Mammary epithelial cell (primary cell): ENCODE measurements at regions of chr16 and their contacts with region 1.

Region 1: DNA sequence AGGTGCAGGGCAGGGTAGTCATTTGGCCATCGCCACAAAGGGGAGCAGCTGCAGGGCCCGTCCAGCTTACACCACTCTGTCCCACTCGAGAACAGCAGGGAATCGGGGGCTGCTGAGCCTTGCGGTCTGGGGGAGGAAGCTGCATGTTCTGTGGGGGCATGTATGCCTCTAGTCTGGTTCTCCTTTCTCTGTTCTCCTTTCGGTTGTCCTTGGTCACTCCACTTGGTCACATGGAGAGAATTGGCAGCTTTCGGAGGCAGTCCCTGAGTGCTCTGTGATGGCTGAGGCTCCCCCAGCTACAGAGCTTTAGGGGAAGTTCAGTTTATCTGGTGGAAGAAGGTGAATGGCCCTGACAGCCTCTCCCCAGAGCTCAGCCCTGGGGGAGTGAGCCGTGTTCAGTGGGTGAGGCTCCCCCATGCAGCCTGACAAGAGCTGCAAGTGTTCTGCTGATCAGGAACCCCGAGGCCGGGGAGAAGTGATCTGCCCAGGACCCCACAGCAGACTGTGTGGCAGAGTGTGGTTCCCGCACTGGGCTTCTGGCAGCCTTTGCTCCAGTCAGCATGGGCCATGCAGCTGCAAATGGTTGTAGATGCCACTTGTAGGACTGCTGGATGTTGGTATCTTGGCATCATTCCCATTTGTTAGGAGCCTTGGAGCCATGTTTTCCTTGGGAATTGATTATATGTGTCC is 22.3 kb upstream of the SMPD3 start:
- DNase-seq: no peak
- H3K4me3 ChIP-seq: no peak overlapping the region
- H3K27ac ChIP-seq: no peak overlapping the region
- H3K4me1 ChIP-seq: peaks cover 6% of the 10 kb centered on the region
- H3K27me3 ChIP-seq: peaks cover 5% of the 10 kb centered on the region
- CTCF ChIP-seq: no peak

Region 2: DNA sequence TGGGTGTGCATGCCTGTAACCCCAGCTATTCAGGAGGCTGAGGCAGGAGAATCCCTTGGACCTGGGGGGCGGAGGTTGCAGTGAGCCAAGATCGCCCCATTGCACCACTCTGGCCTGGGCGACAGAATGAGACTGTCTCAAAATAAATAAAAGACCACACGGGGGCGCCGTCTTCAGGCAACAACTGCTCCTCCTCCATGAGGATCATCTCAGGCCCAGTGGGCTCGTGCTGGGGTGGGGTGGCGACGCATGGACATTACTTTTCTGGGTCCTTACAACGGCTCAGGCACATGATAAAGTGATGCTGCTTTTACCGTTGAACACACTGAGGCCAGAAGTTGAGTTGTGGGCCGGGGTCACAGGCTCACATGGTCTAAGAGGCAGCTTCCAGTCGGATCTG is 103.6 kb before region 1 on chr16:
- CTCF ChIA-PET with region 1: no interaction called
- dilution Hi-C with region 1: loop called (anchors 5 kb)
- in situ Hi-C with region 1: no loop called
- intact Hi-C with region 1: no loop called
- DNase-seq: no peak
- H3K4me3 ChIP-seq: no peak overlapping the region
- H3K27ac ChIP-seq: no peak overlapping the region
- H3K4me1 ChIP-seq: no peaks in the 10 kb centered on the region
- H3K27me3 ChIP-seq: no peaks in the 10 kb centered on the region
- CTCF ChIP-seq: peak; percentile 34 to 45

Region 3: DNA sequence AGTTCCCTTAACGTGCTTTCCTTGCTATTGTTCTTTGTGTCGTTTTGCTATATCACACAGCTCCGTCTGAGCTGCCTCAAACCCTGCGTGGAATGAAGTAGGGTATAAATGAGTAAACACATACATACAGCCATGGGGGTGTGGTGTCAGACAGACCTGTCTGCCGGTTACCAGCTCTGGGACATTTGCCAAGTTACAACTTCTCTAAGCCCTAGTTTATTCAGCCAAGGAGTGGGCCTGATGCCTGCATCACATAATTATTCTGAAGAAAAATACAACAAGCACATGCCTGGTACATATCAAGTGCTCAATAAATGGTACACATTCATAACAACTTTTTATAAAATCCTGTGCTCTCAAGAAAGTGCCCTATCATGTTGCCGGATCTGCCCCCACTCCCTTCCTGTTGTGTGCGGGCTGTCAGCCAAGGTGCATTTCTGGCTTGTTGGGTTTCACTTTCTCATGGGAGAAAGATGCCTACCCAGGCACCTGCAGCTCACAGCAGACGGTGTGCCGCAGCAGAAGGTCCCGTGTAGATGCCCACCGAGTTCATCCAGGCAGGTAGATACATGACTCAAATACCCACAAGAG is 52.8 kb before region 1 on chr16:
- CTCF ChIA-PET with region 1: no interaction called
- dilution Hi-C with region 1: no loop called
- in situ Hi-C with region 1: no loop called
- intact Hi-C with region 1: no loop called
- DNase-seq: peak; percentile 66
- H3K4me3 ChIP-seq: no peak overlapping the region
- H3K27ac ChIP-seq: no peak overlapping the region
- H3K4me1 ChIP-seq: peaks cover 8% of the 10 kb centered on the region
- H3K27me3 ChIP-seq: no peaks in the 10 kb centered on the region
- CTCF ChIP-seq: no peak

Region 4: DNA sequence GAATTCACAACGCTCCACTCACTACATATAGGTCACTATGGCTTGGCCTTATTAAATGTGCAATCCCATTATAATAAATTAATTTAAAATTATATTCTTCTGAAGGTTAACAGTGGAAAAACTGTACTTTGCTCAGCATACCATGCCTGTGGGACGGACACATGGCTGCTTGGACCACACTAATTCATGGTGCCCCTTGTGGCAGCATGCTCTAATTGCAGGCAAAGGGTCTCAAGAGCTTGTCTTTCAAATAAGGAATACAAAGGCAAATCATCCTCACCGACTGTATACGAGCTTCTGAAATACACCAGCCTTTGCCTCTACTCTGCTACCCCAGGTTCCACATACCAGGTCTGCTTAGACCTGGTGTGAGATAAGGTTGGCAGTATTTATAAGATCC is 34.0 kb before region 1 on chr16:
- CTCF ChIA-PET with region 1: no interaction called
- dilution Hi-C with region 1: loop called (anchors 5 kb)
- in situ Hi-C with region 1: no loop called
- intact Hi-C with region 1: no loop called
- DNase-seq: no peak
- H3K4me3 ChIP-seq: no peak overlapping the region
- H3K27ac ChIP-seq: no peak overlapping the region
- H3K4me1 ChIP-seq: no peaks in the 10 kb centered on the region
- H3K27me3 ChIP-seq: peaks cover 3% of the 10 kb centered on the region
- CTCF ChIP-seq: peak; percentile 29 to 34

Region 5: DNA sequence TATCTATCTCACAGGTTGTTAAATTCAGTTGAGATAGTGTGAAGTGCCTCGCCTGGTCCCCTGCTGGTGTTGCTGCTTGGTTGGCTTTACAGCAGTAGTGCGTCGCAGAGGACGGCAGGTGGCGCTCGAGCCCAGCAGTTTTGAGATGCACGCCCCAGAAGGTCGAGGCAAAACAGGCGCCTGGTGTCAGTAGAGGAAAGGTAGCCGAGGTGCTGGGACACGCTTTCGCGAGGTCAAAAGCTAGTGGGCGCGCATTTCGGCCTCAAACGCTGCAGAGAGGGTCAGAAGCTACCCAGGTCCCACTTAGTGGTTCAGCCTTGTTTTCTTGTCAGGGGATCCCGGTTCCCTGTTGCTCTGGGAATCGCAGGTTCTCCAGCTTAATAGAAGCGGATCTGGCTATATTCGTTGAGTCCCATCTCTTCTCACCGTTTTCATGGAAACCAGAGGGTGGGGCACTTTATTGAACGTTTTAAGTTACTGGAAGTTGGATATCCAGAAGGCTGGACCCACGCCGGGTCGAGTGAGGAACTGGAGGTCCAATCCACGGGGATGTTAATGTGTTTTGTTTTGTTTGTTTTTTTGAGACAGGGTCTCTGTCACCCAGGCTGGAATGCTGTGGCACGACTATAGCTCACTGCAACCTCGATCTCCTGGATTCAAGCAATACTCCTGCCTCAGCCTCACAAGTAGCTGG is 58.2 kb after region 1 on chr16:
- CTCF ChIA-PET with region 1: no interaction called
- dilution Hi-C with region 1: no loop called
- in situ Hi-C with region 1: no loop called
- intact Hi-C with region 1: no loop called
- DNase-seq: peak; percentile 72
- H3K4me3 ChIP-seq: peak overlapping the region; percentile 5 to 32 (median 30)
- H3K27ac ChIP-seq: no peak overlapping the region
- H3K4me1 ChIP-seq: peaks cover 19% of the 10 kb centered on the region
- H3K27me3 ChIP-seq: no peaks in the 10 kb centered on the region
- CTCF ChIP-seq: peak; percentile 82 to 91

Region 6: DNA sequence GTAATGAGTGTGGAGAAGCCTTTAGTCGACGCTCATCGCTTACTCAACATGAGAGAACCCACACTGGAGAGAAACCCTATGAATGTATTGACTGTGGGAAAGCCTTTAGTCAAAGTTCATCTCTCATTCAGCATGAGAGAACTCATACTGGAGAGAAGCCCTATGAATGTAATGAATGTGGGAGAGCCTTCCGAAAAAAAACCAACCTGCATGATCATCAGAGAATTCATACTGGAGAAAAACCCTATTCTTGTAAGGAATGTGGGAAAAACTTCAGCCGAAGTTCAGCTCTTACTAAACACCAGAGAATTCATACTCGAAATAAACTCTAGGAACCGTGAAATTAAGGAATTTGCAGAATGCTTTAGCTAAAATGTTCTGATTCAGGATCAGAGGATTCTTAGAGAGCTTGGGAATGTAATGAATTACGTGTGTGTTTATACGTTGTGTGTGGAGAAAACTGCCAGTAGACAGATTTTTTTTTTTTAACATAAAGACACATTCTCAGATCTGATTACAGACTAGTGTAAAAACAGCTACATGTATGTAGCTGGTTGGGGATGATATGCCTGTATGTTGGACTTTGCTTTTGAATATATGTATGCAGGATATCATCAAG is 93.9 kb after region 1 on chr16:
- CTCF ChIA-PET with region 1: no interaction called
- dilution Hi-C with region 1: no loop called
- in situ Hi-C with region 1: no loop called
- intact Hi-C with region 1: no loop called
- DNase-seq: no peak
- H3K4me3 ChIP-seq: no peak overlapping the region
- H3K27ac ChIP-seq: no peak overlapping the region
- H3K4me1 ChIP-seq: no peaks in the 10 kb centered on the region
- H3K27me3 ChIP-seq: no peaks in the 10 kb centered on the region
- CTCF ChIP-seq: no peak

Region 7: DNA sequence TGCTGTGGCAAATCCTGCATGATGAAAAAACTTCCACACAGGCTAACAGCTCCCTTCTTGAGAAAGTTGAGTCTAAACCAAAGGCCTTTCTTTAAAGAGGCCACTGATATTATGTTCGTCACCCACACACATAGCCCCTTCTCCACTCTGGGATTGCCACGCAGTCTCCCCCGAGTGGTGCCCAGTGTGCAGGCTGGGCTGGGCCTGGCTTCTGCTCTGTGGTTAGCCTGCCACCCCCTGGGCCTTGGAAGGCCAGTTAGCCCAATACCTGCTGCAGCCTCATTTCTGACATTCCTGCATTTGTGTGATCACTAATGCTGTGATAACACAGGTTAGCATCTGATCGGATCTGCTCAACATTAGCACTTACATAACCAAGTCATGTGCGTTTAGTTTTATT is 219.3 kb after region 1 on chr16:
- CTCF ChIA-PET with region 1: no interaction called
- dilution Hi-C with region 1: no loop called
- in situ Hi-C with region 1: no loop called
- intact Hi-C with region 1: no loop called
- DNase-seq: no peak
- H3K4me3 ChIP-seq: no peak overlapping the region
- H3K27ac ChIP-seq: no peak overlapping the region
- H3K4me1 ChIP-seq: no peaks in the 10 kb centered on the region
- H3K27me3 ChIP-seq: no peaks in the 10 kb centered on the region
- CTCF ChIP-seq: peak in 1 of 2 donors; percentile 4